T-cell (primary cell): ENCODE measurements at regions of chr17 and their contacts with region 1.

Region 1: GRCh38 chr17:42609182-42609813 is at the starts of genes RETREG3 and TUBG1:
- DNase-seq: peak; percentile 97 to 100 (median 99)
- ATAC-seq: peak; percentile 90 to 93 (median 92)
- H3K4me3 ChIP-seq: peak within 1 kb of the TSS; percentile 95 to 99
- H3K4me3 Mint-ChIP-seq: peak within 1 kb of the TSS; percentile 98 to 100 (median 99)
- H3K27ac ChIP-seq: peak within 1 kb of the TSS; percentile 77
- H3K27ac Mint-ChIP-seq: peak within 1 kb of the TSS; percentile 99 to 100
- H3K4me1 ChIP-seq: peaks cover 22 to 36% of the 10 kb centered on the region in 2 experiments
- H3K4me1 Mint-ChIP-seq: peaks cover 43 to 49% (median 46%) of the 10 kb centered on the region in 3 donors
- H3K27me3 ChIP-seq: no peaks in the 10 kb centered on the region
- H3K27me3 Mint-ChIP-seq: no peaks in the 10 kb centered on the region
- total RNA-seq, gene RETREG3: 72.4 to 150 (median 139) TPM
- total RNA-seq, gene TUBG1: 6.5 to 18.9 (median 16.2) TPM

Region 2: DNA sequence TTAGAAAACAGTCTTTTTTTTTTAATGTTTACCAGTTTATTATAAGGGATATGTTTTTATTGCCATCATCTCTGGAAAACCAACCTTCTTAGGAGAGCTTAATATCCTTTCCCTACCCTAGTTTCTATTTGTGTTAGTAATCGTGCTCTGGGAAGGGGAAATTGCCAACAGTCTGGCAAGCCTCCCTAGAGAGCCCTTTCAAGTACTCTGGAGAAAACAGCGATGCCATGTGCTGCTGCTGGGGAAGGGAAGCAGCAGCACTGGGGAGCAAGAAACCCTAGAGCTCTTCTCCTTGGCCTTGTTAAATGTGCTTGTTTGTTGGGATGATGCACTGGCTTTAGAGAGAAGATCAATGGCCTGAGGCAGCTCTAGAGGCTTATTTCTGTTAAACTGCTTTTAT is 10.4 kb before region 1 on chr17:
- CTCF ChIA-PET with region 1: interaction called in 1 of 2 experiments, 3 read pairs
- POLR2A ChIA-PET with region 1: interaction called in 1 of 2 experiments, 17 read pairs
- DNase-seq: no peak
- ATAC-seq: no peak
- H3K4me3 ChIP-seq: no peak overlapping the region
- H3K4me3 Mint-ChIP-seq: peak overlapping the region in 1 of 3 donors; percentile 15
- H3K27ac ChIP-seq: no peak overlapping the region
- H3K27ac Mint-ChIP-seq: peak overlapping the region in 1 of 2 donors; percentile 19
- H3K4me1 ChIP-seq: peaks cover 0 to 16% of the 10 kb centered on the region in 2 experiments
- H3K4me1 Mint-ChIP-seq: peaks cover 35 to 44% (median 41%) of the 10 kb centered on the region in 3 donors
- H3K27me3 ChIP-seq: no peaks in the 10 kb centered on the region
- H3K27me3 Mint-ChIP-seq: no peaks in the 10 kb centered on the region

Region 3: DNA sequence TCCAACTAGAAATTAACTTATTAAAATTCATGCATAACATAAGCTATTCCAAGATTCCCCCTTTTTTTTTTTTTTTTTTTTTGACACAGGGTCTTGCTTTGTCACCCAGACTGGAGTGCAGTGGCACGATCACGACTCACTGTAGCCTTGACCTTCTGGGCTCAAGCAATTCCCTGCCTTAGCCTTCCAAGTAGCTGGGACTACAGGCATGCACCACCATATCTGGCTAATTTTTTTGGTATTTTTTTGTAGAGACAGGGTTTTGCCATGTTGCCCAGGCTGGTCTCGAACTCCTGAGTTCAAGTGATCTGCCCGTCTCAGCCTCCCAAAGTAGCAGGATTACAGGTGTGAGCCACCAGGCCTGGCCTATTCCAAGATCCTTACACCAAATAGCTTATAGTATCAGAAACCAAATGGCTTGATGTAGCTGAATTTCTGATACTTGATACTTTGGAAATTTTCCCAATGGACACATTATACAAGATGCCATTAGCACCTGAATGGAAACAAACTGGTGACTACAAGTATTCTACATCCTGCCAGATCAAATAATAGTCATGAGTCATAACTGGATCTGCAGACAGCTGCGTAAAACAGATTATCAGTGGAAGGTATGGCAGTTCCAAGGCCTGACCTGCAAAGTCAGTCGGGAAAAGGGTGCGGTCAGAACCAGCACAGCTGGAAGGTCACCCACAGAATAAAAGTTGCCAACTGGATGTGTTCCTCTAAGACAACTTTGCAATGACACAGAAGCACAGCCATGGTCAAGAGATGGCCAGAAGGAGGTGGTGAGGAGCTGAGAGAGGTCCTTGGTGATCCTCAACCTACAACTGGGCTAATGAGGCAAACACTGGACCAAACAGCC is 14.7 kb after region 1 on chr17:
- CTCF ChIA-PET with region 1: no interaction called
- POLR2A ChIA-PET with region 1: interaction called in 1 of 2 experiments, 15 read pairs
- DNase-seq: no peak
- ATAC-seq: no peak
- H3K4me3 ChIP-seq: no peak overlapping the region
- H3K4me3 Mint-ChIP-seq: no peak overlapping the region
- H3K27ac ChIP-seq: no peak overlapping the region
- H3K27ac Mint-ChIP-seq: no peak overlapping the region
- H3K4me1 ChIP-seq: no peaks in the 10 kb centered on the region
- H3K4me1 Mint-ChIP-seq: peaks cover 0 to 1% (median 0%) of the 10 kb centered on the region in 3 donors
- H3K27me3 ChIP-seq: no peaks in the 10 kb centered on the region
- H3K27me3 Mint-ChIP-seq: peaks cover 0 to 3% of the 10 kb centered on the region in 2 donors

Region 4: GRCh38 chr17:42760652-42761581 is 151.6 kb after region 1 on chr17 and contains the start of gene RAMP2:
- CTCF ChIA-PET with region 1: no interaction called
- POLR2A ChIA-PET with region 1: interaction called in 1 of 2 experiments, 15 read pairs
- DNase-seq: peak in 3 of 35 experiments; percentile 9 to 29 (median 20)
- ATAC-seq: peak; percentile 53 to 67 (median 61)
- H3K4me3 ChIP-seq: peak within 1 kb of the TSS; percentile 6 to 25
- H3K4me3 Mint-ChIP-seq: peak within 1 kb of the TSS; percentile 17 to 61 (median 51)
- H3K27ac ChIP-seq: no peak within 1 kb of the TSS
- H3K27ac Mint-ChIP-seq: no peak within 1 kb of the TSS
- H3K4me1 ChIP-seq: peaks cover 0 to 14% of the 10 kb centered on the region in 2 experiments
- H3K4me1 Mint-ChIP-seq: peaks cover 0 to 14% (median 9%) of the 10 kb centered on the region in 3 donors
- H3K27me3 ChIP-seq: peaks cover 7 to 65% of the 10 kb centered on the region in 2 experiments
- H3K27me3 Mint-ChIP-seq: peaks cover 55 to 71% of the 10 kb centered on the region in 2 donors
- total RNA-seq, gene RAMP2: not detected